ENCODE measurements at regions of chr2 and their contacts with region 1.

Region 1: GRCh38 chr2:241702132-241703031 is 543 bp downstream of the ING5 start:
- DNase-seq: peak; percentile 51 to 73 (median 62)
- H3K4me3 ChIP-seq: peak overlapping the region; percentile 38 to 86 (median 65)
- H3K4me3 Mint-ChIP-seq: peak overlapping the region; percentile 78 to 80
- H3K27ac ChIP-seq: peak overlapping the region; percentile 68 to 79
- H3K27ac Mint-ChIP-seq: peak overlapping the region in 4 of 7 donors; percentile 27 to 41 (median 34)
- H3K4me1 ChIP-seq: peaks cover 15 to 22% of the 10 kb centered on the region in 2 donors
- H3K4me1 Mint-ChIP-seq: peaks cover 16% of the 10 kb centered on the region
- H3K27me3 ChIP-seq: no peaks in the 10 kb centered on the region
- H3K27me3 Mint-ChIP-seq: peaks cover 0 to 8% (median 0%) of the 10 kb centered on the region in 3 donors
- CTCF ChIP-seq: no peak

Region 2: GRCh38 chr2:241391892-241392665 is 310.3 kb before region 1 on chr2:
- intact Hi-C with region 1: no loop called
- DNase-seq: no peak
- H3K4me3 ChIP-seq: no peak overlapping the region
- H3K4me3 Mint-ChIP-seq: no peak overlapping the region
- H3K27ac ChIP-seq: no peak overlapping the region
- H3K27ac Mint-ChIP-seq: no peak overlapping the region
- H3K4me1 ChIP-seq: no peaks in the 10 kb centered on the region
- H3K4me1 Mint-ChIP-seq: no peaks in the 10 kb centered on the region
- H3K27me3 ChIP-seq: no peaks in the 10 kb centered on the region
- H3K27me3 Mint-ChIP-seq: peaks cover 0 to 2% (median 1%) of the 10 kb centered on the region in 3 donors
- CTCF ChIP-seq: no peak

Region 3: GRCh38 chr2:241686649-241687425 is 15.5 kb before region 1 on chr2 and contains the start of gene DTYMK:
- intact Hi-C with region 1: loop called (anchors 2 kb)
- DNase-seq: peak; percentile 92 to 97 (median 96)
- H3K4me3 ChIP-seq: peak within 1 kb of the TSS; percentile 87 to 92 (median 89)
- H3K4me3 Mint-ChIP-seq: peak within 1 kb of the TSS; percentile 89 to 94
- H3K27ac ChIP-seq: peak within 1 kb of the TSS; percentile 50 to 89
- H3K27ac Mint-ChIP-seq: peak within 1 kb of the TSS; percentile 80 to 96 (median 89)
- H3K4me1 ChIP-seq: peaks cover 20 to 24% of the 10 kb centered on the region in 2 donors
- H3K4me1 Mint-ChIP-seq: peaks cover 25% of the 10 kb centered on the region
- H3K27me3 ChIP-seq: no peaks in the 10 kb centered on the region
- H3K27me3 Mint-ChIP-seq: peaks cover 0 to 1% (median 0%) of the 10 kb centered on the region in 3 donors
- CTCF ChIP-seq: no peak
- polyA plus RNA-seq, gene DTYMK: 13.0 to 23.5 (median 18.7) TPM

Region 4: GRCh38 chr2:241877989-241878970 is 175.9 kb after region 1 on chr2:
- intact Hi-C with region 1: loop called (anchors 5 kb)
- DNase-seq: peak; percentile 40 to 62 (median 58)
- H3K4me3 ChIP-seq: no peak overlapping the region
- H3K4me3 Mint-ChIP-seq: no peak overlapping the region
- H3K27ac ChIP-seq: no peak overlapping the region
- H3K27ac Mint-ChIP-seq: peak overlapping the region in 1 of 7 donors; percentile 40
- H3K4me1 ChIP-seq: peaks cover 20 to 21% of the 10 kb centered on the region in 2 donors
- H3K4me1 Mint-ChIP-seq: peaks cover 15% of the 10 kb centered on the region
- H3K27me3 ChIP-seq: no peaks in the 10 kb centered on the region
- H3K27me3 Mint-ChIP-seq: peaks cover 0 to 10% (median 2%) of the 10 kb centered on the region in 3 donors
- CTCF ChIP-seq: peak; percentile 56